ENCODE measurements at regions of chr6 and their contacts with region 1.

Region 1: DNA sequence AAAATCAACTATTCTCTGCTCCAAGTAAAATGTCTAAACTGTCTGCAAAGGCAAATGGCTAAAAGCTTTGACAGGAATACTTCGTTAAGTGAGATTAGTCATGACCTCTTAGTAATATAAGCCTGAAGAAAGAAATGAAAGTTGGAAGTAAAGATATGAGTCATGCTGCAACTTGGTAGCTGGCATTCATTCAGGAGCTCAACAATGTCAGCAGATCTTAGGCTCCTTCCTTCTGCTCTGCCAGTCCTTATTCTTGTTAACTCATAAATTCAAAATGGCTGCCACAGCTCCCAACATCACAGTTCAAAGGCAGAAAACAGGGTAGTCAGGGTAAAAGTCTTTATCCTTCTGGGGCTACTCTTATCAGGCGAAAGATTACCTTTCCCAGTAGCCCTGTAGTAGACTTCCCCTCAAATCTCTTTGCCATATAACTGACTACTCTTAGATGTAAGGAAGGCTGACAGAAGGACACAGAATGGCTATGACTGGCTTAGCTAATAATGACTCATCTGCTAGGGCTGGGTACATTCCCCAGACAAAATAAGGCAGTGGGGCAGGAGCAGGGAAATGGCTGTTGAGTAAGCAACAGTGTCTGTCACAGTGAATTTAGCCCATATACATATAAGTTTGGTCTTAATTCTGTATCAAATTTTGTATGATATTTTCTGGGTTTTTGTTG is 24.4 kb upstream of the C6orf62 start:
- DNase-seq: peak; percentile 75
- H3K4me3 Mint-ChIP-seq: peak overlapping the region; percentile 13
- H3K27ac Mint-ChIP-seq: peak overlapping the region; percentile 88
- H3K4me1 Mint-ChIP-seq: peaks cover 28% of the 10 kb centered on the region
- H3K27me3 Mint-ChIP-seq: peaks cover 4% of the 10 kb centered on the region

Region 2: DNA sequence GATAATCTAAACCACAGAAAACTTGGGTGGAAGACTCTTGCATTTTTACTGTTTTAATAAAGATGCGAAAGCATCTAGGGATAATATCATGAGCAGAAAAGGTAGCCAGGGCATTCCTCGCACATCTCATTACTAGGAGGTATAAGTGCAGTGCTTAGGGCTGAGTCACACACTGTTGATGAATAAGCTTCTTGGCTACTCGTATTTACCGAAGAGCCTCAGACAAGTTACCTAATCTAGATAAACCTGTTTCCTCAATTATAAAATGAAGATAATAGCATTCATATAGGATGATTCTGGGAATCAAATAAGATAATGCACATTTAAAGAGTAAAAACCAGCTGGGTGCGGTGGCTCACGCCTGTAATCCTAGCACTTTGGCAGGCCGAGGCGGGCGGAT is 96.6 kb before region 1 on chr6:
- CTCF ChIA-PET with region 1: no interaction called
- intact Hi-C with region 1: loop called (anchors 1 kb)
- DNase-seq: no peak
- H3K4me3 Mint-ChIP-seq: peak overlapping the region; percentile 84
- H3K27ac Mint-ChIP-seq: no peak overlapping the region
- H3K4me1 Mint-ChIP-seq: peaks cover 13% of the 10 kb centered on the region
- H3K27me3 Mint-ChIP-seq: peaks cover 13% of the 10 kb centered on the region

Region 3: GRCh38 chr6:25006565-25007001 is 263.2 kb after region 1 on chr6:
- CTCF ChIA-PET with region 1: no interaction called
- intact Hi-C with region 1: loop called (anchors 1 kb)
- DNase-seq: peak; percentile 72
- H3K4me3 Mint-ChIP-seq: peak overlapping the region; percentile 31
- H3K27ac Mint-ChIP-seq: peak overlapping the region; percentile 68
- H3K4me1 Mint-ChIP-seq: peaks cover 80% of the 10 kb centered on the region
- H3K27me3 Mint-ChIP-seq: no peaks in the 10 kb centered on the region

Measured in activated naive CD4-positive, alpha-beta T cell treated with anti-CD3 and anti-CD28 coated beads for 36 hours (primary cell).